ENCODE measurements at regions of chr15 and their contacts with region 1.

Region 1: GRCh38 chr15:92992720-92993119 is 92.6 kb downstream of the CHD2 start:
- DNase-seq: no peak
- H3K4me3 ChIP-seq: no peak overlapping the region
- H3K27ac ChIP-seq: no peak overlapping the region
- H3K4me1 ChIP-seq: peaks cover 0 to 12% (median 3%) of the 10 kb centered on the region in 4 donors
- H3K27me3 ChIP-seq: no peaks in the 10 kb centered on the region
- CTCF ChIP-seq: no peak
- EP300 ChIP-seq: no peak
- POLR2A ChIP-seq: no peak

Region 2: DNA sequence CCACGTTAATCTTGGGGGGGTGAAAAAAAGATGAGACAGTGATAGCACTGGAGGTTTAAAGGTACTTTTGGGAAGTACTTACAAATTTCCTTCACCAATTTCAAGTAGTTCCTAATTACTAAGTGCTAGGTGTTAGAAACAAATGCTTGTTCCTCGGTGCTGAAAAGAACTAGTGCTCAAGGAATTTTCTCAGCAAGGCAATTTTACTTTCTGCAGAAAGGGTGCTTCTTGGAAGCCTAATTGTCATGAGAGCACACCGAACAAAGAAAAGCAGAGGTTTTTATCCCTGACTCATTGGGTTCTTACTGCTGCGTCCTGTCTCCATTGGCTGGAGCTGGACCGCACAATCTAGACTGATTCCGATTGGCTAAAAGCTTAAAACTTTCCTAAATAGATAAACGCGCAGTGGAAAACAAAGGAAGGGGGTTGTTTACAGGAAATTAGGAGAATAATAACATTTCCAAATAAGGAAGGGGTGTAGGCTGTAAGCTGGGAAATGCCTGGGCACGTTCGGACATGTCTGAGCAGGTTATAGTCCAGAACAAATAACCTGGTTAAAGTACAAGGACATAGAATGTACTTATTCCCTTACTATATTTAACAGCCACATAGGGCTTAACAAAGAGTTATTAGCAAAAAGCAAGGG is 43.0 kb before region 1 on chr15:
- intact Hi-C with region 1: loop called (anchors 10 kb)
- DNase-seq: no peak
- H3K4me3 ChIP-seq: no peak overlapping the region
- H3K27ac ChIP-seq: no peak overlapping the region
- H3K4me1 ChIP-seq: no peaks in the 10 kb centered on the region
- H3K27me3 ChIP-seq: no peaks in the 10 kb centered on the region
- CTCF ChIP-seq: no peak
- EP300 ChIP-seq: no peak
- POLR2A ChIP-seq: no peak

Measured in stomach (tissue), 19 donors.